Activated CD8-positive, alpha-beta memory T cell treated with anti-CD3 and anti-CD28 coated beads, Interleukin-2, amount 10 ng/mL, durations not matched to agents 7 days and 5 days (primary cell): ENCODE measurements at regions of chr10 and their contacts with region 1.

Region 1: GRCh38 chr10:73874267-73875138 is at the start of gene CAMK2G:
- DNase-seq: peak; percentile 91
- ATAC-seq: peak; percentile 93
- H3K4me3 Mint-ChIP-seq: peak within 1 kb of the TSS; percentile 74
- H3K27ac Mint-ChIP-seq: peak within 1 kb of the TSS; percentile 37
- H3K4me1 Mint-ChIP-seq: peaks cover 61% of the 10 kb centered on the region
- H3K27me3 Mint-ChIP-seq: peaks cover 10% of the 10 kb centered on the region
- total RNA-seq, gene CAMK2G: 30.8 to 49.2 TPM

Region 2: DNA sequence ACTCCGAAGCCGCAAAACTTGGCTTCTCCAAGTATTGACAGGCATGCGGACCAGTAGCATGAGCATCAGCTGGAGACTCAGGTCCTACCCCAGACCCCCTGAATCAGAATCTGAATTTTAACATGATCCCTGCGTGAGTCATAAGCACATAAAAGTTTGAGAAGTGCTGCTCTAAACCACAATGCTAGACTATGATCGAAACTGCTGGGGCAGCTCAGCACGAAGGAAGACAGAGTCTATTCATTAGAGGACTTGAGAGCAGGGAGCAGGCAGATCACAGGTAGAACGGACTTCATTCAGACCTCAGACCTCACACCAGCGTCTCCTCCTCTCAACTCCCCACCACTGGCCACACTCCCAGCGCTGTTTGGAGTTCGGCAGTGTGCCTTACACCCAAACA is 17.1 kb before region 1 on chr10:
- CTCF ChIA-PET with region 1: interaction called, 411 read pairs
- DNase-seq: peak; percentile 84
- ATAC-seq: peak; percentile 84
- H3K4me3 Mint-ChIP-seq: peak overlapping the region; percentile 43
- H3K27ac Mint-ChIP-seq: peak overlapping the region; percentile 85
- H3K4me1 Mint-ChIP-seq: peaks cover 67% of the 10 kb centered on the region
- H3K27me3 Mint-ChIP-seq: no peaks in the 10 kb centered on the region